Panc1 (cell line): ENCODE measurements at regions of chr11 and their contacts with region 1.

Region 1: GRCh38 chr11:12834166-12834565 is 159.9 kb downstream of the TEAD1 start:
- DNase-seq: no peak
- ATAC-seq: no peak
- H3K4me3 ChIP-seq: no peak overlapping the region
- H3K27ac ChIP-seq: no peak overlapping the region
- H3K4me1 ChIP-seq: peaks cover 28% of the 10 kb centered on the region
- H3K27me3 ChIP-seq: no peaks in the 10 kb centered on the region
- CTCF ChIP-seq: no peak

Region 2: DNA sequence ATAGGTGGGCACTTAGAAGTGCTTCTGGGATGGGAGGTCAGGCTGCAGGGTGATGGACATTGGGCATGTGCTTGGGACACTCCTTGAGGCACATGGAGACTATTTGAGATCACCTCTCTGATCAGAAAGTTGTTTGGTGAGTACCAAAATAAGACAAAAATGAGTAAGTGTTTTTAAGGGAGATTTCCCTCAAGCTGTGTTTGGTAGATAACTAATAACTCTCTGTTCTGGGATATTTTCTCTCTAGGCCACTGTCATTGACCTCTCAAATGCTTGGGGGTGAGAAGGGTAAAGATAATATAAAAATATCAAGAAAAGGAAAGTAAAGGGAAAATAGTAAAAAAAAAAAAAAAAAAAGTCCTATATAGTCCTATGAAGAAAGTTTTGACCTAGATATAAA is 42.1 kb before region 1 on chr11:
- CTCF ChIA-PET with region 1: no interaction called
- POLR2A ChIA-PET with region 1: interaction called, 14 read pairs
- in situ Hi-C with region 1: no loop called
- intact Hi-C with region 1: no loop called
- DNase-seq: no peak
- ATAC-seq: no peak
- H3K4me3 ChIP-seq: no peak overlapping the region
- H3K27ac ChIP-seq: no peak overlapping the region
- H3K4me1 ChIP-seq: no peaks in the 10 kb centered on the region
- H3K27me3 ChIP-seq: no peaks in the 10 kb centered on the region
- CTCF ChIP-seq: no peak

Region 3: DNA sequence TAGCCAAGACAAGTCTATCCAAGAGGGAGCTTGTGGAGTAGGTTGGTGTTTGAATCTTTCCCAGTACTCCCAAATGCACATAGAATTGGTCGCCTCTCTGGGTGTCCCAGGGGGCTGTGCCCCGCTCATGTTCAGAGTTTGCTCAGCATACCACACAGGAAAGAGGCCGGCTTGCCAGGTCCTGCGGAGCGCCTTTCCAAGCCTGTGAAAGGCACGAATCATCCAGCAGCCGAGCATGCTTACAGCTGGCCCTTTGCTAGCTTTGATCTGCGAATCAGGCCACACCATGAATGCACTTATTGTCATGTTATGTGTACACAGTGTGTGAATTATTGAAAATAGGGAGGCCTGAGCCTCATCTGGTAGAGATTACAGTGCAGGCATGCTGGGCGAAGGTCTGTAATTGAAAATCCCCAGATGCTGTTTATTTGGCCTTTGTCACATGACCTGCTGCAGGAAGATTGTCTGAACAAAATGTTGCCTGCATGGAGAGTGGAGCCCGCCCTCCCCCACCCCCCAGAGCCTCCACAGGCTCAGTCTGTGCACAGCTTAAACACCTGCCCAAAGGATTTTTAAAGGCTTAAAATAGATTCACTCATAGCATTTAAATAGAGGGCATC is 11.7 kb after region 1 on chr11:
- CTCF ChIA-PET with region 1: no interaction called
- POLR2A ChIA-PET with region 1: interaction called, 12 read pairs
- in situ Hi-C with region 1: no loop called
- intact Hi-C with region 1: no loop called
- DNase-seq: no peak
- ATAC-seq: peak; percentile 49; the same call in 1 of the 2 replicates
- H3K4me3 ChIP-seq: no peak overlapping the region
- H3K27ac ChIP-seq: peak overlapping the region; percentile 39; the same call in 1 of the 2 replicates
- H3K4me1 ChIP-seq: peaks cover 40% of the 10 kb centered on the region
- H3K27me3 ChIP-seq: no peaks in the 10 kb centered on the region
- CTCF ChIP-seq: no peak